Activated CD4-positive, alpha-beta T cell treated with anti-CD3 and anti-CD28 coated beads, Interleukin-2, amount 10 ng/mL, durations not matched to agents 7 days and 5 days (primary cell): ENCODE measurements at regions of chr13 and their contacts with region 1.

Region 1: DNA sequence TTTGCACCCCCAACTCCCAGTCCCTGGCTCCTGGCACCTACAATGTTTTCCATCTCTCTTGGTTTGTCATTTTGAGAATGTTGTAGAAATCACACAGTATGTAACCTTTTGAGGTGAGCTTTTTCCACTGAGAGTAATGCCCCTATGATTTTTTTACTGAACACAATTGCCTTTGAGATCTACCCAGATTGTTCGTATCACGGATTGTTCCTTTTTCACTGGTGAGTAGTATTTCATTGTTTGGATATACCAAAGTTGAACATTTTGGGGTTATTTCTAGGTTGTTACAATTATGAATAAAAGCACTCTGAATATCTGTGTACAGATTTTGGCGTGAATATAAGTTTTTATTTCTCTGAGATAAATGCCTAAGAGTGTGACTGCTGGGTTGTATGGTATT is 17.7 kb upstream of the ANKRD10 start:
- DNase-seq: no peak
- H3K4me3 Mint-ChIP-seq: no peak overlapping the region
- H3K27ac Mint-ChIP-seq: no peak overlapping the region
- H3K4me1 Mint-ChIP-seq: no peaks in the 10 kb centered on the region
- H3K27me3 Mint-ChIP-seq: peaks cover 14% of the 10 kb centered on the region

Region 2: GRCh38 chr13:110915057-110915873 is 17.3 kb before region 1 on chr13 and contains the start of gene ANKRD10:
- CTCF ChIA-PET with region 1: interaction called, 13 read pairs
- POLR2A ChIA-PET with region 1: no interaction called
- DNase-seq: peak; percentile 92
- H3K4me3 Mint-ChIP-seq: peak within 1 kb of the TSS; percentile 88
- H3K27ac Mint-ChIP-seq: peak within 1 kb of the TSS; percentile 96
- H3K4me1 Mint-ChIP-seq: peaks cover 44% of the 10 kb centered on the region
- H3K27me3 Mint-ChIP-seq: no peaks in the 10 kb centered on the region
- total RNA-seq, gene ANKRD10: 101 to 111 TPM

Region 3: DNA sequence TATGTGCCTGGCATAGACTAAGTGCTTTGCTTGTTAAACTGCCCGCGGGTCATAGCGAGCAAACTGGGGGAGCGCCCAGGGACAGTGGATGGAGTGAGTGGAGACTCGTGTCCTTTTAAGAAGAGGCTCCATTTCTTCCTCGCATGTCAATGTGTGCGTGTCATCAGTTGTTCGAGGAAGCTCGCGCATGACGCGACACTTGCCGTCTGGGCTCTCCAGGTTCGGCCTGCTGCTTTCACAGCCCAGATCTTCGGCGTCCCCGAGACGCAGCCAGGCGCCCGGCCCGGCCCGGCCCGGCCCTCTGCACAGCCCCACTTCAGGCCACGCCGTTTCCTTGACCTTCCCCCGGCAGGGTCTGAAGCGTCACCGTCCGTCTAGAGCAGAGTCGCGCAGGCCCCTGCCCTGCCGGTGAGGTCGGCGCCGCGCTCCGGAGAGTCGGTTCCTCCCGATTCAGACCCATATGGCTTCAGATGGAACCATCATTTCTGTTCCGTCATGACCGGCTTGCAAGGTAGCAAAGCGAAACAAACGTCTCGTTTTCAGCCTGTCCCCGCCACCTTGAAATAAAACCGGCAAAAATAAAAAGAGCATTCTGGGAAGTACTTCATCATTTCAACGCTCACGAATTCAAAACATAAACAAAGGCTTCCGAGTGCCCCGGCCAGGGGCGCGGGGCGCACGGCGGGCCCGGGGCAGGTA is 181.9 kb after region 1 on chr13:
- CTCF ChIA-PET with region 1: no interaction called
- POLR2A ChIA-PET with region 1: no interaction called
- DNase-seq: peak; percentile 20
- H3K4me3 Mint-ChIP-seq: peak overlapping the region; percentile 79
- H3K27ac Mint-ChIP-seq: peak overlapping the region; percentile 68
- H3K4me1 Mint-ChIP-seq: peaks cover 14% of the 10 kb centered on the region
- H3K27me3 Mint-ChIP-seq: peaks cover 85% of the 10 kb centered on the region